ENCODE measurements at regions of chr22 and their contacts with region 1.

Region 1: GRCh38 chr22:23036684-23037428 is 33.5 kb upstream of the GNAZ start:
- DNase-seq: peak; percentile 58
- H3K4me3 ChIP-seq: peak overlapping the region; percentile 17
- H3K27ac ChIP-seq: peak overlapping the region; percentile 98
- H3K4me1 ChIP-seq: peaks cover 80% of the 10 kb centered on the region
- CTCF ChIP-seq: no peak

Region 2: DNA sequence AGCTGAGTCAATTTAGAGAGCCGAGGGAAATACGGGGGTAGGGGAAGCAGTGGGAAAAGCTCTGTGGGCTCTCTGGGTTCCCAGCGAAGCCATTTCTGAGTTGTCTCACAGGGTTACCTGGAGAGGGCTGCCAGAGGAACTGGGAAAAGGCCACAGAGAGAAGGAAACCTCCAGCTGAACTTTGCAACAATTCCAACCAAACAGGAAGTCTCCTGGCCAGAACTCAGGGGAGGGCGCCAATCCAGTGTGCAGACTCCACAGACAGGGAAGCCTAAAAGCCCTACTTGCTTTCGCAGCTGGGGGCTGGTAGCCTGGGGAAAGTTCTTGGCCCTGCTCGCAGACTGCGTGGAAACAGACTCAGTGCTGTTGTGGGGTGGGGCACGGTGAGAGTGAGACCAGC is 10.4 kb after region 1 on chr22:
- CTCF ChIA-PET with region 1: no interaction called
- POLR2A ChIA-PET with region 1: interaction called, 11 read pairs
- intact Hi-C with region 1: no loop called
- DNase-seq: no peak
- H3K4me3 ChIP-seq: no peak overlapping the region
- H3K27ac ChIP-seq: no peak overlapping the region
- H3K4me1 ChIP-seq: peaks cover 11% of the 10 kb centered on the region
- CTCF ChIP-seq: no peak

Region 3: GRCh38 chr22:23069502-23070357 is 32.9 kb after region 1 on chr22:
- CTCF ChIA-PET with region 1: interaction called, 5 read pairs
- POLR2A ChIA-PET with region 1: interaction called, 5 read pairs
- intact Hi-C with region 1: loop called (anchors 2 kb)
- DNase-seq: peak; percentile 93
- H3K4me3 ChIP-seq: peak overlapping the region; percentile 62
- H3K27ac ChIP-seq: no peak overlapping the region
- H3K4me1 ChIP-seq: peaks cover 81% of the 10 kb centered on the region
- CTCF ChIP-seq: no peak

Region 4: DNA sequence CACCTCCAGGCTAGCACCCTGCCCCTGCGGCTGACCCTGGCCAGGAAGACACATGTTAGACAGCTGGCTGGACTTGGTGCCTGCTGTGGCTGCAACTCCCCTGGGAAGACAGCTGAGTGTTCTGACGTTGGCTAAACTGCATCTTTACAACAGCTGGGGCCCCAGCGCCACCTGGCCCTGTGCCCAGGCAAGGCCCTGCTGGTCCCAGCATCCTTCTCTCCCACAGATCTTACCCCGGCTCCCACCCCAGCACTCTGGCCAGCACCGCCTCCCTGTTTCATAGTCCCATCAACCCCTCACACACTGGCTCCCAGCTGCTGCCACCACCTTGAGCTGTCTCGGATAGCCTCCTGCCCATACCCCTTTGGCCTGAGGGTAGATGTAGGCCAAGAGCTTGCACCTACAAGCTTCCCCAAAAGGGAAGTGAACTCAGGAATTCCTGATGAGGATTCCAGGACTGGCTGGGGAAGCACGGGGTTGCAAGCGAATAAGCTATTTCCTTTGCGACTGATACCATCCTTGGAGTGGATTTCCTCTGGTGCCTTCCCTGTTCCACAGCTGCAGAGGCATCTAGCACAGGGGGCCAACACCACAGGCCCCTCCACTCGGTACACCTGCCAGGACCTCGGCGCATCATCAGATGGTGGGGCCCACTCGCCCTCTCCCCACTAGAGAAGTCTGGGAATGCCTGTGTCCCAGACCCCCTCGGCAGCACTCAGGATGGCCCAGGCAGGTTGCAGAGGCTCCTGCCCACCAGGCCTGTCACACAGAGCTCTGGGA is 76.4 kb after region 1 on chr22:
- CTCF ChIA-PET with region 1: interaction called, 3 read pairs
- POLR2A ChIA-PET with region 1: interaction called, 3 read pairs
- intact Hi-C with region 1: loop called (anchors 1 kb)
- DNase-seq: peak; percentile 84
- H3K4me3 ChIP-seq: no peak overlapping the region
- H3K27ac ChIP-seq: no peak overlapping the region
- H3K4me1 ChIP-seq: peaks cover 29% of the 10 kb centered on the region
- CTCF ChIP-seq: peak; percentile 48; the same call in 1 of the 2 replicates

Region 5: DNA sequence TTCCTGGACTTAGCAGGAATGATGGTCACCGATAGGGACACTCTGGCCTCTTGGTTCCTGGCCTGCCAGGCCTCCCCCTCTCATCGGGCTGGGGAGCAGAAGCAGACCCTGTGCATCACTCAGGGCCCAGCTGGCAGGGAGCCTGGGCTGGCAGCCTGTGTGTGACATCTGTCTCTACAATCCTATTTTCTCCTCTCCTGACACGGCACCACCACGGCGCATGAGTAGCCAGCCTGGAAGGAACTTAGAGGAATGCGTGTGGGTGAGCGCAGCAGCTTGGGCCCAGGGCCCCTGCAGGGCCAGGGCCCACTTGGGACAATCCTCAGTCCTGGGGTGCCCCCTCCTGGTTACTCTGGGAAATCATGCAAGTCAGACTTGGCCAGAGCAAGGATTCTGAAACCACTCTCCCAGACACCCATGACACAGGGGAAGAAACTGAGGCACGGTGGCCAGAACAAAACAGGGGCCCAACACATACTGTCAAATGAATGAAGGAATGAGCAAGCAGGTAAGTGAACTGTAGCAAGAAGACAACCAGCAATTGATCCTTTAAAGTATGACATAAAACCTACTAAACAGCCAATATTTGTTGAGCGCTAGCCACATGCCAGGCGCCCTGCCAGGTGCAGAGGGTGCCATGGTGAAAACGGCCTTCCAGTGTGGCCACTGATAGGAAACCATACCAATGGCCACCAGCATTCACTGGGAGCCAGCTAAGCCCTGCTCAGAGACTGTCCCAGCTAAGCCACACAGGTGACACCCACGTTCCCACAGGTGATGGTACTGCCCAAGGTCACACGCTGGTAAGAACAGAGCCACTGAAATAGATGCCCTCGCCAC is 91.6 kb after region 1 on chr22:
- CTCF ChIA-PET with region 1: no interaction called
- POLR2A ChIA-PET with region 1: no interaction called
- intact Hi-C with region 1: loop called (anchors 5 kb)
- DNase-seq: peak; percentile 87
- H3K4me3 ChIP-seq: no peak overlapping the region
- H3K27ac ChIP-seq: no peak overlapping the region
- H3K4me1 ChIP-seq: peaks cover 17% of the 10 kb centered on the region
- CTCF ChIP-seq: peak; percentile 97

Measured in OCI-LY7 (cell line).